Calu3 (cell line): ENCODE measurements at regions of chr11 and their contacts with region 1.

Region 1: GRCh38 chr11:62841361-62842184 is 2.2 kb upstream of the WDR74 start:
- DNase-seq: peak; percentile 88
- H3K4me3 Mint-ChIP-seq: no peak overlapping the region
- H3K27ac Mint-ChIP-seq: no peak overlapping the region
- H3K4me1 Mint-ChIP-seq: peaks cover 13% of the 10 kb centered on the region
- H3K27me3 Mint-ChIP-seq: no peaks in the 10 kb centered on the region
- CTCF ChIP-seq: no peak

Region 2: DNA sequence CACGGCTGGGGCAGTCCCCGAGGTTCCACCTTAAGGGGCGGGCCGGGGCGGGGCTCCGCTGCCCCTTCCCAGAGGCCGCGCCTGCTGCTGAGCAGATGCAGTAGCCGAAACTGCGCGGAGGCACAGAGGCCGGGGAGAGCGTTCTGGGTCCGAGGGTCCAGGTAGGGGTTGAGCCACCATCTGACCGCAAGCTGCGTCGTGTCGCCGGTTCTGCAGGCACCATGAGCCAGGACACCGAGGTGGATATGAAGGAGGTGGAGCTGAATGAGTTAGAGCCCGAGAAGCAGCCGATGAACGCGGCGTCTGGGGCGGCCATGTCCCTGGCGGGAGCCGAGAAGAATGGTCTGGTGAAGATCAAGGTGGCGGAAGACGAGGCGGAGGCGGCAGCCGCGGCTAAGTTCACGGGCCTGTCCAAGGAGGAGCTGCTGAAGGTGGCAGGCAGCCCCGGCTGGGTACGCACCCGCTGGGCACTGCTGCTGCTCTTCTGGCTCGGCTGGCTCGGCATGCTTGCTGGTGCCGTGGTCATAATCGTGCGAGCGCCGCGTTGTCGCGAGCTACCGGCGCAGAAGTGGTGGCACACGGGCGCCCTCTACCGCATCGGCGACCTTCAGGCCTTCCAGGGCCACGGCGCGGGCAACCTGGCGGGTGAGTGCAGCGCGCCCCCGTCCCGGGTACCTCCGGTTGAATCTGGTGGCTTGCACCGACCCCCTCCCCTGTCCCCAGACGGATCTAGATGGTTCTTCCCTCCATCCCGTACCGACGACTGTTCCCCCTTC is 39.4 kb after region 1 on chr11 and contains the start of gene SLC3A2:
- CTCF ChIA-PET with region 1: interaction called, 7 read pairs
- intact Hi-C with region 1: loop called (anchors 2 kb)
- DNase-seq: peak; percentile 88
- H3K4me3 Mint-ChIP-seq: peak within 1 kb of the TSS; percentile 100
- H3K27ac Mint-ChIP-seq: peak within 1 kb of the TSS; percentile 100
- H3K4me1 Mint-ChIP-seq: peaks cover 58% of the 10 kb centered on the region
- H3K27me3 Mint-ChIP-seq: peaks cover 9% of the 10 kb centered on the region
- CTCF ChIP-seq: peak; percentile 80
- total RNA-seq, gene SLC3A2: 410 and 444 TPM in 2 replicates

Region 3: GRCh38 chr11:63404161-63404935 is 562.8 kb after region 1 on chr11:
- CTCF ChIA-PET with region 1: no interaction called
- intact Hi-C with region 1: no loop called
- DNase-seq: no peak
- H3K4me3 Mint-ChIP-seq: no peak overlapping the region
- H3K27ac Mint-ChIP-seq: no peak overlapping the region
- H3K4me1 Mint-ChIP-seq: no peaks in the 10 kb centered on the region
- H3K27me3 Mint-ChIP-seq: peaks cover 88% of the 10 kb centered on the region
- CTCF ChIP-seq: no peak